Right ventricle myocardium inferior (tissue), 1 donor: ENCODE measurements at regions of chr16 and their contacts with region 1.

Region 1: DNA sequence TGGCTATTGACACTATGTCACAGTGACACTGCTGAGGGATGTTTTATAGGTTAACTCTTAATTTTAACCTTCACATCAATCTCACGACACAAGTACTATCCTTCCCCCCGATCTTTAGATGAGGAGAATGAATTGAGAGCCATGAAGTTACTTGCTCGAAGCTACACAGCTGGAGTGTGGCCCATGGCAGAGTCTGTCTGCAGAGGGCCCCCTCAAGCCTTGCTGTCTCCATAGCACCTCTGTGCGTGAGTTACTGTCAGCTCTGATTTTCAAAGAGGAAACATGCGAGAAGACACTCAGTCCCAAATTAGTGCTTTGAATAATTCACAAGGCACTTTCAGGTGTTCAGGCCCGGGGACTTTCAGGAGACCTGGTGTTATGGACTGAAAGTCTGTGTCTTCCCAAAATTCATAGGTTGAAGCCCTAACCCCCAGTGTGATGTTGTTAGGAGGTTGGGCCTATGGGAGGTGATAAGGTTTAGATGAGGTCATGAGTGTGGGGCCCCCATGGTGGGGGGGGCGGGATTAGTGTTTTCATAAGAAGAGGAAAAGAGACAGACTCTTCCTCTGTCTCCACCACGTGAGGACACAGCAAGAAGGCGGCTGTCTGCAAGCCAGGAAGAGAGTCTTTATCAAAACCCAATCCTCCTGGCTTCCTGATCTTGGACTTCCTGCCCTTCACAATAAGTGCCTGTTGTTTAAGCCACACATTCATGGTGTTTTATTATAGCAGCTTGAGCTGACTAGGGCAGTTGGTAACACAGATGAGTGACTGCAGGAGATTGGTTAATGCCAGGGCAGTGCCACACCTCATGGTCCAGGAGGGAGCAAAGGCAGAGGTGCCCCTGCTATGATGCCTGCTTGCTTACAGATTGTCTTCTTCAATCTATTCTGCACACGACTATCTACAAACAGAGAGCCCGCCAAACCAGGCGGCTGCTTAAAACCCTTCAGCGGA is 281.8 kb downstream of the HAPSTR1 start:
- DNase-seq: no peak
- ATAC-seq: no peak

Region 2: GRCh38 chr16:9159839-9160550 is 213.2 kb before region 1 on chr16:
- intact Hi-C with region 1: no loop called
- DNase-seq: no peak
- ATAC-seq: peak; percentile 42

Region 3: DNA sequence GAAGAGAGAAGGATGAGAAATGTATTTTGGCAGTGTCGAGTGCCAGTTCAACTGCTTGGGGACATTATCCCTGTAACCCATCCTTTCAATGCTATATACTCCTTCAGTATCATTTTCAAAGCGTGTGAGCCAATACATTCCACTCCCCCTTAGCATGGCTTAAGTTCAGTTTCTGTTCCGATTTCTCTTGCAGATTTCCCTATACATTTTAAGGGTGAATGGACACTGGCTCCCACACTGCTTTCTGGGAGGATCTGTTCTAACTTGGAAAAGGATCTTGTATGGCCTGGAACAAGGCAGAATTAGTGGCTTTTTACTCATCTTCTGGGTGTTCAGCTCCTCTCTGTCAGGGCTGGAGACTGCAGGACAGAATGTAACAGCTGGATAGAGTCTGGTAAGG is 52.0 kb after region 1 on chr16:
- intact Hi-C with region 1: loop called (anchors 10 kb)
- DNase-seq: no peak
- ATAC-seq: no peak

Region 4: DNA sequence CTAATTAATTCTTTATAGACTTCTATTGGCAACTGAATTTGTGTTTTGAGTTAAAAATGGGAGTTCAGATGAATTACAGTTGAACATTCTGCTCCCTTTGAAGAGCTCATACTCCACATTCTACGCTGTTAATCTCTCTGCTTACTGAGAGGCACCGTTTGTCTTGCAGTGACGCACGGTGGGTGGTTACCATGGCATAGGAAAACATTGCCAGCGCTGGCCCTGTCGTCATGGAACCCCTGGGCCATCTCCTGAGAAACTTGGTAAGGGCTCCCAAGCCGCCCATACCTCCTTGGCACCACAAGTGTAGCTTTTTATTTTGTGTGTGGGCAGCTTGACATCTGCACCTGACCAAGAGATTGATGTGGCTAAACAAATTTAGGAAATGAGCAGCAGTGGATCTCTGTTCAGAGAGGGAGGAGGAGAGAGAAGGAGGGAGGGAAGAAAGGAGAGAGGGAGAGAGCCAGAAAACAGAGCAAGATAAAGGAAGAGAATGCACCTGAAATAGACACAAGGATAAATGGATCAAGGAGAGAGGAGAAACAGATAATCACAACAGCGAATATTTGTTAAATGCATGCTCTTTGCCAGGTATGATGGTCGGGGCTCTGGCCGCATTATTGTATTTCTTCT is 116.7 kb after region 1 on chr16:
- intact Hi-C with region 1: loop called (anchors 5 kb)
- DNase-seq: peak; percentile 74
- ATAC-seq: peak; percentile 91

Region 5: DNA sequence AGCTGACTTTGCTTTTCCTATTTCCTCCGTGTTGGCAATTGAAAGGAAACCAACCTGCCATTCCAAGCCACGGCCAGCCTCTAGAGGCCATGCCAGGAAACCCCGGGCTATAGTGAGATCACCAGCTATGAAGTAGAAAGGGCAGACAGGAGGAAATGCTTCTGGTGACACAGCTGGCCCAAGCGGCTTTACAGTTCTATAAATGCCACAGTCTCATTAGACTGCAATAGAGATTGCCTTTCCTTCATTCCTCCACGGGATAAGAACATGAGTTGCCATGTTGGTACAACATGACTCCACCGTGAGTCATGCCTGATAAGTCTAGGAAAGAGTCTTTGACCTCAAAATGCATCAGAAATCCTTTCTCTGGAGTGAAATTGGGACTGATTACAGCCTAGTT is 424.1 kb after region 1 on chr16:
- intact Hi-C with region 1: loop called (anchors 5 kb)
- DNase-seq: no peak
- ATAC-seq: peak; percentile 72